CD8-positive, alpha-beta T cell (primary cell): ENCODE measurements at regions of chr3 and their contacts with region 1.

Region 1: GRCh38 chr3:187066228-187066995 is 72.9 kb downstream of the RPL39L start:
- DNase-seq: peak; percentile 15 to 80 (median 54)
- ATAC-seq: peak; percentile 92
- H3K4me3 ChIP-seq: no peak overlapping the region
- H3K4me3 Mint-ChIP-seq: no peak overlapping the region
- H3K27ac ChIP-seq: no peak overlapping the region
- H3K27ac Mint-ChIP-seq: peak overlapping the region; percentile 94
- H3K4me1 ChIP-seq: peaks cover 35% of the 10 kb centered on the region
- H3K4me1 Mint-ChIP-seq: peaks cover 64% of the 10 kb centered on the region
- H3K27me3 ChIP-seq: no peaks in the 10 kb centered on the region
- H3K27me3 Mint-ChIP-seq: no peaks in the 10 kb centered on the region
- CTCF ChIP-seq: peak; percentile 44

Region 2: DNA sequence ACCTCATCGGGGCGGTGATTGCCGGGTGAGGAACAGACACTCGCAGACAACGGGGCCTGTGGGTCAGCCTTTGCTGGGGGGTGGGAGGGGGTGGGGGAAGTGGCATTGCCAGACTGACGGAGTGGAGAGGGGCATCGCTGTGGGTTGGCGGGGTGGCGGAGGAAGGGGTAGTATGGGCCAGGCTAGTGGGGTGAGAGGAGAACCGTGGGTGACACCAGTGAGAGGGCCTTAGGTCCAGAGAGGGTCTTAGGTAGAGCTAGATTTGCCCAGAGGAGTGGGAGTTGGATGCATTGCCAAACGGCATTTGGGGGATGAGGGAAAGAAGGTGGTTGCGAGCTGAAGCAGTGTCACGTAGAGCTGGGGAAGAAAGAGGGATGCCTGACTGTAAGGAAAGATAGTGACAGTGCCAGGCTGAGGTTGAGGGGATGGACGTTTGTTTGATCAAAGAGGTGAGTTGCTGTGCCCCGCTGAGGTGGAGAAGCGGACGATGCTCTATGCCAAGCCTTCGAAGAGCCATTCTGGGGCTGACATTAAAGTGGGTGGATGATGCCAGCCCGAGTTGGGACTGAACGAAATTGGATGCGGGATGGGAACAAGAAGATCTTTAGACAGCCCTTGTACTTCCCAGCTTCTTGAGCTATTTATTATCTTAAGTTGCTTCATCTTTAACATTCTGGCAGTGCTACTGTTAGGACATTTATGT is 495.3 kb before region 1 on chr3:
- CTCF ChIA-PET with region 1: no interaction called
- POLR2A ChIA-PET with region 1: no interaction called
- intact Hi-C with region 1: no loop called
- DNase-seq: peak in 1 of 9 experiments; percentile 49
- ATAC-seq: no peak
- H3K4me3 ChIP-seq: peak overlapping the region; percentile 73 to 96
- H3K4me3 Mint-ChIP-seq: peak overlapping the region; percentile 94
- H3K27ac ChIP-seq: peak overlapping the region; percentile 94 to 97
- H3K27ac Mint-ChIP-seq: peak overlapping the region; percentile 98
- H3K4me1 ChIP-seq: peaks cover 29% of the 10 kb centered on the region
- H3K4me1 Mint-ChIP-seq: peaks cover 58% of the 10 kb centered on the region
- H3K27me3 ChIP-seq: no peaks in the 10 kb centered on the region
- H3K27me3 Mint-ChIP-seq: no peaks in the 10 kb centered on the region
- CTCF ChIP-seq: no peak

Region 3: DNA sequence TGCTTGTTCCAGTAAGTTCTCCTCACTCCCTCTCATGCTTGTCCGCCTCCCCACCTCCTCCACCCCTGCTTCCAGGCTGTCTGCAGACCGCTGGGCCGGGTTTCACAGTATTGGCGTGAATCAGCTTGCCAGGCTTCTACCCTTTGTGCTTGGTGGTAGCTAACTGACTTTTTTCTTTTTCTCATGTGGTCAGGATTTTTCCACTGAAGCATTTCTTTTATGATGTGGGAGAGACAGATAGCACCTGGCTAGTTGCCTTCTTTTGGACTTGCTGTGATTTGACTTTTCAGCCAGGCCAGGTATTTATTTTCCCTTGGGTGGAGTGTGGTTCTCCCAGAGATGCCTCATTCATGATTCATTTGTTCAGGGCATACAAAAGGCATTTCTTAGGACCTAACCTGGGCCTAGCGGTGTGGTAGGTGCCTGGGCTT is 75.5 kb before region 1 on chr3:
- CTCF ChIA-PET with region 1: interaction called, 3 read pairs
- POLR2A ChIA-PET with region 1: no interaction called
- intact Hi-C with region 1: loop called in 1 of 2 experiments (anchors 5 kb)
- DNase-seq: no peak
- ATAC-seq: no peak
- H3K4me3 ChIP-seq: no peak overlapping the region
- H3K4me3 Mint-ChIP-seq: no peak overlapping the region
- H3K27ac ChIP-seq: no peak overlapping the region
- H3K27ac Mint-ChIP-seq: no peak overlapping the region
- H3K4me1 ChIP-seq: peaks cover 3% of the 10 kb centered on the region
- H3K4me1 Mint-ChIP-seq: peaks cover 56% of the 10 kb centered on the region
- H3K27me3 ChIP-seq: no peaks in the 10 kb centered on the region
- H3K27me3 Mint-ChIP-seq: no peaks in the 10 kb centered on the region
- CTCF ChIP-seq: no peak

Region 4: GRCh38 chr3:187041362-187042307 is 24.8 kb before region 1 on chr3:
- CTCF ChIA-PET with region 1: no interaction called
- POLR2A ChIA-PET with region 1: interaction called, 3 read pairs
- intact Hi-C with region 1: loop called in 1 of 2 experiments (anchors 2 kb)
- DNase-seq: peak in 8 of 9 experiments; percentile 38 to 84 (median 62)
- ATAC-seq: peak; percentile 95
- H3K4me3 ChIP-seq: peak overlapping the region in 1 of 2 experiments; percentile 5
- H3K4me3 Mint-ChIP-seq: peak overlapping the region; percentile 49
- H3K27ac ChIP-seq: peak overlapping the region; percentile 44 to 86
- H3K27ac Mint-ChIP-seq: peak overlapping the region; percentile 95
- H3K4me1 ChIP-seq: peaks cover 80% of the 10 kb centered on the region
- H3K4me1 Mint-ChIP-seq: peaks cover 82% of the 10 kb centered on the region
- H3K27me3 ChIP-seq: no peaks in the 10 kb centered on the region
- H3K27me3 Mint-ChIP-seq: no peaks in the 10 kb centered on the region
- CTCF ChIP-seq: no peak

Region 5: DNA sequence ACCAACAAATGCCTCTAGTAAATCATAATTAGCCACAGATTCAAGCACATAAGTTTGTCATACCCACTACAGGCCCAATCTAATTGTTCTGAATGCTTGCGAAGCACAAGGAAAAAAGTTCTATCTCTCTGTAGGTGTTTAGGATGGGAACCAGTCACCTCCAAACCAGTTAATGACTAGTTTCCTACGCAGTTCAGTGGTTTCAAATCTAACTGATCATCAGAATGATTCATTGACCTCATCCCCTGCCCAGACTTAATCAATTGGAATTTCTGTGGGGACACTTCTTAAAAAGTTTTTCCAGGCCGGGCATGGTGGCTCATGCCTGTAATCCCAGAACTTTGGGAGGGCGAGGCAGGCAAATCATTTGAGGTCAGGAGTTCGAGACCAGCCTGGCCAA is 249.5 kb after region 1 on chr3:
- CTCF ChIA-PET with region 1: no interaction called
- POLR2A ChIA-PET with region 1: no interaction called
- intact Hi-C with region 1: no loop called
- DNase-seq: no peak
- ATAC-seq: no peak
- H3K4me3 ChIP-seq: no peak overlapping the region
- H3K4me3 Mint-ChIP-seq: no peak overlapping the region
- H3K27ac ChIP-seq: no peak overlapping the region
- H3K27ac Mint-ChIP-seq: no peak overlapping the region
- H3K4me1 ChIP-seq: peaks cover 6% of the 10 kb centered on the region
- H3K4me1 Mint-ChIP-seq: peaks cover 11% of the 10 kb centered on the region
- H3K27me3 ChIP-seq: peaks cover 7 to 14% of the 10 kb centered on the region in 2 experiments
- H3K27me3 Mint-ChIP-seq: peaks cover 59% of the 10 kb centered on the region
- CTCF ChIP-seq: no peak